Activated B cell treated with CpG ODN at 0.5 μM for 24 hours (primary cell): ENCODE measurements at regions of chr2 and their contacts with region 1.

Region 1: DNA sequence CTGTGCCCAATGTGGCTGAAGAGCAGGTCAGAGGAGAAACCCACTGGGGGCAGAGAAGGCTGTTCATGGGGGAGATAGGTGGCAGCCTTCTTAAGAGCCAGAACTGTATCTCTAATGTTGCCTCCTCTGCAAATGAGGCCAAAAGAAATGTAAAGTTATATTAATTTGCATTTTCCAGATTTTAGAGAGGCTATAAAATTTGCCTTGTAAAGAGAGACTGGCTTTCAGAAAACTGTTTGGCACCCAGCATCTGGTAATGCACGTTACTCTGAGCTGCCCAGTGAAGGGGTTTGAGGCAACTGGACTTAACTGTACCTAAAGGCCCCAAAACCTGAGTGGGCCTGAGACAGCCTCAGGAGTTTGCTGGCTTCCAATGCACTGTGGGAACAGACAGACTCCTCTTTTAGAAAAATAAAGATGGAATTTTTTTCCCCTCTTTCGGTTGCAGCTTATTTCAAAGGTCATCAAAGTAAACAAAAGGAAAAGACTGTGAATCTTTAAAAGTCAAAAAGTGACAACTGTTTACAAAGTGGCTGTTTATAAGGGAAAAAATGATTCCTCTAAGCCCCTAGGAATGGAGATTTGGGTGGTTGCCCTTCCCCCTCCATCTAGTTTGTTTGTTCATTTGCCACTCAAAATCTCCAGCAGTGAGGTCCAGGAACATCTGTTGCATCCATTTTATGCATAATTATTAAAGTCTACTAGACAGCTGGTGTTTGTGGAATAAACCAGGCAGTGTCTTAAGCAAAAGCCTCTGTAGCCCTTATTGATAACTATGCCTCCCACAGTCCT is 132.2 kb upstream of the ZFP36L2 start:
- DNase-seq: no peak
- ATAC-seq: no peak
- H3K4me3 Mint-ChIP-seq: no peak overlapping the region
- H3K27ac Mint-ChIP-seq: no peak overlapping the region
- H3K4me1 Mint-ChIP-seq: no peaks in the 10 kb centered on the region
- H3K27me3 Mint-ChIP-seq: no peaks in the 10 kb centered on the region
- CTCF ChIP-seq: no peak

Region 2: DNA sequence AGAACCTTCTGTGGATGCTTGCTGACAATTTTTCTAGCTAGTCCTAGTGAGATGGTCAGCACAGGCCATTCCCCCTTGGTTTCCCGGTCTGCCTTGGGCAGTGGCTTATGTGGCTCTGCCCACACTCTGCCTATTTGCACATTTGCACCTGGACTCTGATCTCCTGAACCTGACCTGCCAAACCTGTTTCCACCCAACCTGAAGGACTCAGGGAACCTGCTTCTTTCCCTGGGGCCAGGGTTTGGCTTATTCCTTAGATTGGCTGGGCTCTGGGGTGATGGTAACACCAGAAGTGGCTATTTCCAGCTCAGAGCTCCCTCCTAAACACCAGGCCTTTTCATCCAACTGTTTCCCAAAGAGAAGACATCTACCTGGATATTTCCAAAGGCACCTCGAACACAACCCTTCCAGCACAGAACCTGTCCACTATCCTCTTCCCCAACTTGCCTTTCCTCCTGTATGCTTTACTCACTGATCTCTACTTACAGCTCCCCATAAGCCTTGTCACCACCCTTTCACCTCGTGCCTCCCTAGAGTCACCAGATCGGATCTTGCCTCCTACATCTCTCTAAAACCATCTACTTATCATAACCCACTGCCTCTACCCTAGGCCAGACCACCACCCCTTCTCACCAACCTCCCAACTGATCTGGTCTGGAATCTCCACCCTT is 796.0 kb before region 1 on chr2:
- CTCF ChIA-PET with region 1: no interaction called
- POLR2A ChIA-PET with region 1: interaction called, 12 read pairs
- intact Hi-C with region 1: no loop called
- DNase-seq: no peak
- ATAC-seq: no peak
- H3K4me3 Mint-ChIP-seq: no peak overlapping the region
- H3K27ac Mint-ChIP-seq: no peak overlapping the region
- H3K4me1 Mint-ChIP-seq: peaks cover 17% of the 10 kb centered on the region
- H3K27me3 Mint-ChIP-seq: no peaks in the 10 kb centered on the region
- CTCF ChIP-seq: no peak